ENCODE measurements at regions of chr12 and their contacts with region 1.

Region 1: GRCh38 chr12:48814262-48815125 is 3.8 kb upstream of the CACNB3 start:
- DNase-seq: peak; percentile 81
- ATAC-seq: peak; percentile 25
- H3K4me3 Mint-ChIP-seq: peak overlapping the region; percentile 87
- H3K27ac Mint-ChIP-seq: no peak overlapping the region
- H3K4me1 Mint-ChIP-seq: peaks cover 45% of the 10 kb centered on the region
- H3K27me3 Mint-ChIP-seq: peaks cover 69% of the 10 kb centered on the region
- CTCF ChIP-seq: peak; percentile 92

Region 2: DNA sequence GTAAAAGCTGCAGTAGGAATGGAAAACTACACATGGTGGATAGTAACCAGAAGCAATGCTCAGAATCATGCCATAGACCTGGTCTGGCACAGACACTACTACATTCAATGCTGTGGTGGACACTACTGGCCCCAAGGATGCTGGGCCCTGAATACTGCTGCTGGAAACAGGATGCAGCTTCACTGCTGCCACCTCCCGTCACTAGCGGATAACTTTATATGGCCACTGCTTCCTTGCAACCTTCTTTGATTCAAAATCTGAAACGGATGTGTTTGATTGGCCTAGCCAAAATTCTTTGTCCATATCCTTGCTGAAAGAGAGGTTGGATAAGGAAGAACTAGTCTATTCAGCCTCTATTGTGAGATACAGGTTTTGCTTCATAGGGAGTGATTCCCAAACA is 56.3 kb before region 1 on chr12:
- CTCF ChIA-PET with region 1: interaction called, 44 read pairs
- POLR2A ChIA-PET with region 1: interaction called, 7 read pairs
- DNase-seq: no peak
- ATAC-seq: peak; percentile 45; the same call in 1 of the 2 replicates
- H3K4me3 Mint-ChIP-seq: no peak overlapping the region
- H3K27ac Mint-ChIP-seq: no peak overlapping the region
- H3K4me1 Mint-ChIP-seq: no peaks in the 10 kb centered on the region
- H3K27me3 Mint-ChIP-seq: no peaks in the 10 kb centered on the region; the same call in 1 of the 2 replicates
- CTCF ChIP-seq: no peak

Region 3: GRCh38 chr12:48767047-48767446 is 47.4 kb before region 1 on chr12:
- CTCF ChIA-PET with region 1: interaction called, 15 read pairs
- POLR2A ChIA-PET with region 1: no interaction called
- DNase-seq: no peak
- ATAC-seq: no peak
- H3K4me3 Mint-ChIP-seq: no peak overlapping the region
- H3K27ac Mint-ChIP-seq: 0 out of 2 replicates have a peak overlapping the region, but pooled peaks have one; percentile 61
- H3K4me1 Mint-ChIP-seq: peaks cover 20% of the 10 kb centered on the region
- H3K27me3 Mint-ChIP-seq: no peaks in the 10 kb centered on the region; the same call in 1 of the 2 replicates
- CTCF ChIP-seq: no peak

Region 4: DNA sequence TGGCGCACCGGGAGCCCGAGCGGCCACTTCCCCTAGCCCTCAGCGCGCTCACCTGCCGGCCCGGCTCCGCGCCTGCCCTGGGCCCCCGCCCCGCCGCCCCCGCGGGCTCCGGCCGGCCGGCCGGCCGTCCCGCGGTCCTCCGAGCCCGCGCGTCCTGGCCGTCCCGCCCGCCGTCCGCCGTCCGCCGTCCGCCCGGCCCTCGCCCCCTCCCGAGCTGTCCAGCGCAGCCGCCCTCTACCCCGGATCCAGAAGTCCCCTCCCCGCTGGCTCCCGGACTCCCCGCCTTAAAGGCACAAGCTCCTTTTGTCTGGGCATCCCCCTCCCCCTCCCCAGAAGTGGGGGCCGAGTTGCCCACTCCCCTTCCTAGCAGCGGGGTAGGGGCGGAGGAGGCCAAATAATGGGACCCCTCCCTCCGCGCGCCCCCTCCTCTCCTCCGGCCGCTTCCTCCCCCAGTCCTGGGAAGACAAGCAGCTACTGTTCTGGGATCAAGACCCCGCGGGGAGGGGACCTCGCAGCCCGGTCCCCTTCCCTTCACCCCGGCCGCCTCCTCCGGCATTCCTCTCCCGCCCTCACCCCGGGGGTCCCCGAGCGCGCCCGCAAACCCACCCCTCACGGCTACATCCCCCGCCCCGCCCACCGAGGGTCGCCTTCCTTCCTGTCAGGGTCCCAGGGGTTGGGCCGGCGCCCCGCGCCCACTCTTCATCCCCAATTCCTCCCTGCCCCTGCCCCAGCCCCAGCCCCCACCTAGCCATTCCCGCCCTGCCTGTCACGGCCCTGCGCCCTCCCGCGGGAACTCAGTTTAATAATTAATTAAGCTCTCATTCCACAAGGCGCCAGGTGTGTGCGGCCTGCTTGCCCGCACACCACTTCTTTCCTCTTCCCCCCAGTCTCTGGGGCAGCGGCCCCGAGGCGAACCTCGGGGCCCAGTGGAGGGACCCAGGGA is 25.4 kb before region 1 on chr12 and contains the start of gene ADCY6:
- CTCF ChIA-PET with region 1: interaction called, 38 read pairs
- POLR2A ChIA-PET with region 1: interaction called, 8 read pairs
- DNase-seq: peak; percentile 80
- ATAC-seq: peak; percentile 66
- H3K4me3 Mint-ChIP-seq: peak within 1 kb of the TSS; percentile 94
- H3K27ac Mint-ChIP-seq: peak within 1 kb of the TSS; percentile 39; the same call in 1 of the 2 replicates
- H3K4me1 Mint-ChIP-seq: peaks cover 24% of the 10 kb centered on the region
- H3K27me3 Mint-ChIP-seq: peaks cover 28% of the 10 kb centered on the region
- CTCF ChIP-seq: no peak
- total RNA-seq, gene ADCY6: 11.9 to 12.8 TPM (median 12.2 TPM) in 3 replicates

Region 5: GRCh38 chr12:48795480-48796455 is 18.7 kb before region 1 on chr12:
- CTCF ChIA-PET with region 1: interaction called, 38 read pairs
- POLR2A ChIA-PET with region 1: interaction called, 7 read pairs
- DNase-seq: peak; percentile 87
- ATAC-seq: peak; percentile 95
- H3K4me3 Mint-ChIP-seq: peak overlapping the region; percentile 29; the same call in 1 of the 2 replicates
- H3K27ac Mint-ChIP-seq: no peak overlapping the region
- H3K4me1 Mint-ChIP-seq: peaks cover 10% of the 10 kb centered on the region
- H3K27me3 Mint-ChIP-seq: peaks cover 5% of the 10 kb centered on the region; the same call in 1 of the 2 replicates
- CTCF ChIP-seq: peak; percentile 98

Region 6: GRCh38 chr12:48882315-48882687 is 67.8 kb after region 1 on chr12:
- CTCF ChIA-PET with region 1: interaction called, 12 read pairs
- POLR2A ChIA-PET with region 1: no interaction called
- DNase-seq: peak; percentile 26
- ATAC-seq: peak; percentile 50
- H3K4me3 Mint-ChIP-seq: peak overlapping the region; percentile 50
- H3K27ac Mint-ChIP-seq: peak overlapping the region; percentile 56
- H3K4me1 Mint-ChIP-seq: peaks cover 33% of the 10 kb centered on the region
- H3K27me3 Mint-ChIP-seq: peaks cover 7% of the 10 kb centered on the region
- CTCF ChIP-seq: no peak

Region 7: DNA sequence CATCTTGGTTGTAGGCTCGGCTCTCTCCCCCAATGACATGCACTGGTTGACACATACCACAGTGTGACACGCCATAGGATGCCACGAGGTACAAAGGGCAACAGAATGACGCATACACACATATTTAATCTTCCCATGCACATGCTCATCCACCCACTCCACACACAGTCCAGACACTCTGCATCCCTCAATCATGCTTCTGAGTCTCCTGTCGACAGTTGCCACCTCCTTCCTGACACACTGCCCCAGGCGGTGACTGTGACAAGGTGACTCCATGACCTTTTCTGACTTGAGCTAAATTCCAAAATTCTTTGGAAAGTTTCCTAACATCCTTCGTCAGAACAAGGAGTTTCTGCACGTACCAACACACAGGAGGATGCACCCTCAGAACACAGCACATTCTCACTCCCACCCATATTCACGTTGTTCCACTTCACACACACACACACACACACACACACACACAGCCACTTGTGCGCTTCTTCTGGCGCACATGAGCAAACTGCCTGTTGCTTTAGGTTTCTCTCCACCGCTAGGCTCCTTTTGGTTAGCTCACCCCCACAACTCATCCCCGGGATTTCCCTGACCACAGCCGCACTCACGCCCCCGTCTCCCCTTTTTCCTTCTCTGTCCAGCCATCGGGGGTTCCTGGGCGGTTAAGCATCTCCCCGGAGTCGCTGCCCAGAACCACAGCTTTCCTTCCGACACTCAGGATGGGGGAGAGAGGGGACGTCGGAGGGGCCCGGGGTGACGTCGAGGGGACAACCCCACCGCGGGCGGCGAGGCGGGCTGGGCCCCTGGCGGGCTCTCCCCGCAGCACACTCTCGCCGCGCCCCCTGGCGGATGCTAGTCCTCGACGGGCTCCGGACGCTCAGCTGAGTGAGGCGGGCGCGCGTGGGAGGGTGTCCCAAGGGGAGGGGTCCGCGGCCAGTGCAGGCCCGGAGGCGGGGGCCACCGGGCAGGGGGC is 163.1 kb after region 1 on chr12:
- CTCF ChIA-PET with region 1: interaction called, 11 read pairs
- POLR2A ChIA-PET with region 1: no interaction called
- DNase-seq: peak; percentile 75
- ATAC-seq: peak; percentile 3
- H3K4me3 Mint-ChIP-seq: peak overlapping the region; percentile 45
- H3K27ac Mint-ChIP-seq: no peak overlapping the region
- H3K4me1 Mint-ChIP-seq: peaks cover 31% of the 10 kb centered on the region
- H3K27me3 Mint-ChIP-seq: peaks cover 100% of the 10 kb centered on the region
- CTCF ChIP-seq: peak; percentile 77; the same call in 1 of the 2 replicates

Measured in WTC11 (cell line).